CD8-positive, alpha-beta T cell (primary cell): ENCODE measurements at regions of chr12 and their contacts with region 1.

Region 1: GRCh38 chr12:124388679-124389536 is 94.0 kb downstream of the RFLNA start:
- DNase-seq: peak; percentile 28 to 84 (median 75)
- ATAC-seq: peak; percentile 84
- H3K4me3 ChIP-seq: peak overlapping the region; percentile 45 to 59
- H3K4me3 Mint-ChIP-seq: peak overlapping the region; percentile 69
- H3K27ac ChIP-seq: no peak overlapping the region
- H3K27ac Mint-ChIP-seq: peak overlapping the region; percentile 71
- H3K4me1 ChIP-seq: peaks cover 27% of the 10 kb centered on the region
- H3K4me1 Mint-ChIP-seq: peaks cover 32% of the 10 kb centered on the region
- H3K27me3 ChIP-seq: no peaks in the 10 kb centered on the region
- H3K27me3 Mint-ChIP-seq: no peaks in the 10 kb centered on the region
- CTCF ChIP-seq: no peak

Region 2: GRCh38 chr12:124453419-124454351 is 64.8 kb after region 1 on chr12:
- CTCF ChIA-PET with region 1: no interaction called
- POLR2A ChIA-PET with region 1: no interaction called
- intact Hi-C with region 1: loop called in 1 of 2 experiments (anchors 5 kb)
- DNase-seq: peak; percentile 64 to 95 (median 84)
- ATAC-seq: peak; percentile 78
- H3K4me3 ChIP-seq: peak overlapping the region; percentile 29 to 57
- H3K4me3 Mint-ChIP-seq: peak overlapping the region; percentile 67
- H3K27ac ChIP-seq: peak overlapping the region; percentile 41 to 92
- H3K27ac Mint-ChIP-seq: peak overlapping the region; percentile 82
- H3K4me1 ChIP-seq: peaks cover 82% of the 10 kb centered on the region
- H3K4me1 Mint-ChIP-seq: peaks cover 67% of the 10 kb centered on the region
- H3K27me3 ChIP-seq: no peaks in the 10 kb centered on the region
- H3K27me3 Mint-ChIP-seq: no peaks in the 10 kb centered on the region
- CTCF ChIP-seq: no peak

Region 3: GRCh38 chr12:125259178-125259867 is 870.4 kb after region 1 on chr12:
- CTCF ChIA-PET with region 1: no interaction called
- POLR2A ChIA-PET with region 1: no interaction called
- intact Hi-C with region 1: no loop called
- DNase-seq: no peak
- ATAC-seq: no peak
- H3K4me3 ChIP-seq: no peak overlapping the region
- H3K4me3 Mint-ChIP-seq: no peak overlapping the region
- H3K27ac ChIP-seq: no peak overlapping the region
- H3K27ac Mint-ChIP-seq: no peak overlapping the region
- H3K4me1 ChIP-seq: no peaks in the 10 kb centered on the region
- H3K4me1 Mint-ChIP-seq: no peaks in the 10 kb centered on the region
- H3K27me3 ChIP-seq: no peaks in the 10 kb centered on the region
- H3K27me3 Mint-ChIP-seq: peaks cover 7% of the 10 kb centered on the region
- CTCF ChIP-seq: no peak